ENCODE measurements at regions of chr4 and their contacts with region 1.

Region 1: DNA sequence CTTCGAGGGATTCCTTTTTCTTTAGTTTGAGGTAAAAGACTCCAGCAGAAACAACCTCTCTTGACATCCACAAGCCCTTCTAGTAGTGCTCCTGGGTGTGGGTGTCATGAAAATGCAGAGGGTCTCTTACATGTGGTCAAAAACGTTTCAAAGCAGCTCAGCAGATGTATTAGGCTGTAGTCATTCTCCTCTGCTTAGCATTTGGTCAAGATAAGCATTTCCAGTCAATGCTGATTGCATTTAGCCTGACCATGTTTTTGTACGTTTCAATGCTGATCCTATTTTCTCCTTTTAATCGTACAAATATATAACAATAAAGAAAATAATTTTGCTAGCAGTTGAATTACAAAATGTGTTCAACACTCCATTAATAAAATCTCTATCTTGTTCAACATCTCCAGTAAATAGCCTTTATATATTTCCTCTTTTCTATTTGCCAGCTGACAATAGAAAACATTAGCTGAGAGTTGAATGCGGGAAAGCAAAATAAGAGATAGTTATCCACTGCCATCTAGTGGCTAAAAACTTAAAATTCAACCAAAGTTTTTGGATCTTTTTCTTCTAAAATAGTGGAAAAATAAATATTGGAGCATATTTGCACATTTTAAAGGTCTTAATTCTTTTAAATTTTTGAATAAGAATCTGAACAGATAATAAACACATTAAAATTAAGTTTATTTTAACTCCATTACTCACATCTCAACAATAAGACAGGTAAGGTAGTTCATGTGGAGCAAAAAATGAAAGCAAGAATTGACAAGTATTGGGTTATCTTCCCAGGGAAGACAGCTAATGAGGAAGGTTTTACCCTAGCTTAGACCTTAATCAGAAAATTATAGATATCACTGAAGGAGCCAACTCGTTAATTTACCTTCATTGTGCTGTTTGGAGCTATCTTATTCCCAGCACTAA is 15.2 kb upstream of the PACRGL start:
- DNase-seq: no peak
- ATAC-seq: no peak
- H3K4me3 Mint-ChIP-seq: no peak overlapping the region
- H3K27ac Mint-ChIP-seq: no peak overlapping the region
- H3K4me1 Mint-ChIP-seq: no peaks in the 10 kb centered on the region
- H3K27me3 Mint-ChIP-seq: peaks cover 11% of the 10 kb centered on the region

Region 2: DNA sequence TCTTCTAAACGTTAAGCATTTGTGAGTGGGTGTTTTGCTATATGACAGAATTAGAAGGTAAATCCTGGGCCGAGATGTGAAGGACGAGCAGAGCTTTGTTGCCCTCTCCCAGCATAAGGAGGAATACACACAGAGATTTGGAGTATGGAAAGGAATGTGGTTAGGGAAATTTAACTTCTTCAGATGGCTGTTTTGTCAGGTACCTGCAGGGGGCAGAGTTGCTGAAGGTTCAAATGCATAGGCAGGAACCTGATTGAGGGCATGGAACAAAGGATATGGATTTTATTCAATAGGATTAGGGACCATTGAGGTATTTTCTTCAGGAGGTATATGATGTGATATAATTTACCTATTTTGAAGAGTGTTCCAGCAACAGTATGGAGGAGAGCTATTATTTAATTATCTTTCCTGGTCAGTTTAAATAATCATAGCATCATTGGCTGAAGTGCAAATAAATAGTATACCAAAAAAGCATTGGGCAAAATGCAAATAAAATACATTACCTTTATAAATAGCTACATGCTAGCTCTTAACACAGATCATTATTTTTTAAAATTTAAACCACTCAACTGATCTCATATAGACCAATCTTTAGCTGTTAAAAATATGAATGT is 289.8 kb before region 1 on chr4:
- CTCF ChIA-PET with region 1: interaction called, 12 read pairs
- POLR2A ChIA-PET with region 1: no interaction called
- DNase-seq: peak; percentile 29
- ATAC-seq: no peak
- H3K4me3 Mint-ChIP-seq: no peak overlapping the region
- H3K27ac Mint-ChIP-seq: no peak overlapping the region
- H3K4me1 Mint-ChIP-seq: no peaks in the 10 kb centered on the region
- H3K27me3 Mint-ChIP-seq: no peaks in the 10 kb centered on the region

Region 3: GRCh38 chr4:20416800-20417199 is 268.3 kb before region 1 on chr4:
- CTCF ChIA-PET with region 1: interaction called, 16 read pairs
- POLR2A ChIA-PET with region 1: no interaction called
- DNase-seq: no peak
- ATAC-seq: no peak
- H3K4me3 Mint-ChIP-seq: no peak overlapping the region
- H3K27ac Mint-ChIP-seq: no peak overlapping the region
- H3K4me1 Mint-ChIP-seq: peaks cover 6% of the 10 kb centered on the region
- H3K27me3 Mint-ChIP-seq: peaks cover 7% of the 10 kb centered on the region

Region 4: DNA sequence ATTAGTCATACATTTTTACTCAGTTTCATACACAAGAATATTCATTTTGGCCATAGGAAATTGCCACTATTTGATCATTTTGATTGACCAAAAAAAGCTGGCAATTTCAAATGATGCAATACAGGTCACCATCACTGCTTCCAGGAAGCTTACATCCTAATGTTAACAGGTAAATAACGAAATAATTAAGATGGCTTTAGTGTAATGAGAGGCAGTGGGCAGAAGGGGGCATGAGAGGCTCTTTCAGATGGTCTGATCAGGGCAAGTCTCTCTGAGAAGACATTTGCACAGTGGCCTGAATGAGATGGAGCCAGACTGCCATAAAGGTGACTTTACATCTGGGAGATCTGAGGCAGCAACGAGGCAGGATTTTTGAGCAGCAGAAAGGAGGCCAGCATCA is 262.7 kb before region 1 on chr4:
- CTCF ChIA-PET with region 1: interaction called, 16 read pairs
- POLR2A ChIA-PET with region 1: no interaction called
- DNase-seq: peak; percentile 49
- ATAC-seq: peak; percentile 65
- H3K4me3 Mint-ChIP-seq: no peak overlapping the region
- H3K27ac Mint-ChIP-seq: no peak overlapping the region
- H3K4me1 Mint-ChIP-seq: peaks cover 6% of the 10 kb centered on the region
- H3K27me3 Mint-ChIP-seq: peaks cover 6% of the 10 kb centered on the region

Region 5: GRCh38 chr4:20698382-20698781 is 13.3 kb after region 1 on chr4:
- CTCF ChIA-PET with region 1: interaction called, 14 read pairs
- POLR2A ChIA-PET with region 1: no interaction called
- DNase-seq: no peak
- ATAC-seq: no peak
- H3K4me3 Mint-ChIP-seq: no peak overlapping the region
- H3K27ac Mint-ChIP-seq: no peak overlapping the region
- H3K4me1 Mint-ChIP-seq: peaks cover 15% of the 10 kb centered on the region
- H3K27me3 Mint-ChIP-seq: no peaks in the 10 kb centered on the region

Measured in activated CD8-positive, alpha-beta T cell treated with anti-CD3 and anti-CD28 coated beads, Interleukin-2, amount 10 ng/mL, durations not matched to agents 7 days and 5 days (primary cell).